ENCODE measurements at regions of chr10 and their contacts with region 1.

Region 1: GRCh38 chr10:22228943-22229801 is 11.4 kb upstream of the EBLN1 start:
- DNase-seq: peak; percentile 91
- H3K4me3 Mint-ChIP-seq: peak overlapping the region; percentile 87
- H3K27ac Mint-ChIP-seq: peak overlapping the region; percentile 82
- H3K4me1 Mint-ChIP-seq: no peaks in the 10 kb centered on the region
- H3K27me3 Mint-ChIP-seq: no peaks in the 10 kb centered on the region
- CTCF ChIP-seq: no peak

Region 2: DNA sequence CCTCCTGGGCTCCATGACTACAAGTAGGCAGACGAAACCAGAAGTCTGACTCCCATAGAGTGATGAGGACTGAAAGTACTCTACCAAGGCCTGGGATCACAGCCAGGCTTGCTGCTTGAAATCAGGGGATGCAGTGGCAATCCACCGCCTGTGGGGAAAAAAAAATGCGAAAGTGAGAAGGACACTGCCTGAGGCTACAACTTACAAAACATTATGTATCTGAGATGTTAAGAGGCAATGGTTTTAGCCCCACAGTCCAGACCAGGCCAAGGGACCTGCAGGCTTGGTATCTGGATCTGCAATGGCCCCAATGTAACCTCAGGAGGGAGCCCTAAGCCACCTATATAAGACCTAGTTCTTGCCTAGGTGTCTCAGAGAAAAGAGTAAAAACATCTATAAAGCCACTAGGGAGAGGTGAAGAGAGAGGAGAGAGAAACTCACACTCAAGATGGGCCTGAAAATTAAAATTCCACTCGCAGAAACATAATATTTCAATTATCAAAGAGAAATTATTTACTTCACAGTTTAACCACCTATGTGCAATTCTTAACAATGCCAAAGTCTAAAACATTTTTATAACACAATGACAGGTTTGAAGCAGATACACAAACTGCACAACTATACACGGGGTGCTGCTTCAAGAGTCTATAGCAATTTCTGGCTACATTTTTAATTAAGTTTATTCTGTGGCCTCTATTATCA is 239.6 kb before region 1 on chr10:
- CTCF ChIA-PET with region 1: interaction called, 4 read pairs
- POLR2A ChIA-PET with region 1: interaction called, 10 read pairs
- intact Hi-C with region 1: no loop called
- DNase-seq: peak; percentile 74
- H3K4me3 Mint-ChIP-seq: peak overlapping the region; percentile 5
- H3K27ac Mint-ChIP-seq: peak overlapping the region; percentile 63
- H3K4me1 Mint-ChIP-seq: peaks cover 19% of the 10 kb centered on the region
- H3K27me3 Mint-ChIP-seq: no peaks in the 10 kb centered on the region
- CTCF ChIP-seq: peak; percentile 42

Region 3: GRCh38 chr10:22010973-22011408 is 218.2 kb before region 1 on chr10:
- CTCF ChIA-PET with region 1: interaction called, 9 read pairs
- POLR2A ChIA-PET with region 1: interaction called, 11 read pairs
- intact Hi-C with region 1: no loop called
- DNase-seq: peak; percentile 31
- H3K4me3 Mint-ChIP-seq: no peak overlapping the region
- H3K27ac Mint-ChIP-seq: no peak overlapping the region
- H3K4me1 Mint-ChIP-seq: no peaks in the 10 kb centered on the region
- H3K27me3 Mint-ChIP-seq: no peaks in the 10 kb centered on the region
- CTCF ChIP-seq: peak; percentile 25

Region 4: GRCh38 chr10:22193945-22194344 is 35.2 kb before region 1 on chr10:
- CTCF ChIA-PET with region 1: no interaction called
- POLR2A ChIA-PET with region 1: no interaction called
- intact Hi-C with region 1: no loop called
- DNase-seq: no peak
- H3K4me3 Mint-ChIP-seq: no peak overlapping the region
- H3K27ac Mint-ChIP-seq: no peak overlapping the region
- H3K4me1 Mint-ChIP-seq: no peaks in the 10 kb centered on the region
- H3K27me3 Mint-ChIP-seq: no peaks in the 10 kb centered on the region
- CTCF ChIP-seq: no peak

Region 5: GRCh38 chr10:22245567-22245966 is 16.4 kb after region 1 on chr10:
- CTCF ChIA-PET with region 1: no interaction called
- POLR2A ChIA-PET with region 1: interaction called, 14 read pairs
- intact Hi-C with region 1: loop called (anchors 1 kb)
- DNase-seq: no peak
- H3K4me3 Mint-ChIP-seq: no peak overlapping the region
- H3K27ac Mint-ChIP-seq: no peak overlapping the region
- H3K4me1 Mint-ChIP-seq: peaks cover 22% of the 10 kb centered on the region
- H3K27me3 Mint-ChIP-seq: no peaks in the 10 kb centered on the region
- CTCF ChIP-seq: no peak

Region 6: DNA sequence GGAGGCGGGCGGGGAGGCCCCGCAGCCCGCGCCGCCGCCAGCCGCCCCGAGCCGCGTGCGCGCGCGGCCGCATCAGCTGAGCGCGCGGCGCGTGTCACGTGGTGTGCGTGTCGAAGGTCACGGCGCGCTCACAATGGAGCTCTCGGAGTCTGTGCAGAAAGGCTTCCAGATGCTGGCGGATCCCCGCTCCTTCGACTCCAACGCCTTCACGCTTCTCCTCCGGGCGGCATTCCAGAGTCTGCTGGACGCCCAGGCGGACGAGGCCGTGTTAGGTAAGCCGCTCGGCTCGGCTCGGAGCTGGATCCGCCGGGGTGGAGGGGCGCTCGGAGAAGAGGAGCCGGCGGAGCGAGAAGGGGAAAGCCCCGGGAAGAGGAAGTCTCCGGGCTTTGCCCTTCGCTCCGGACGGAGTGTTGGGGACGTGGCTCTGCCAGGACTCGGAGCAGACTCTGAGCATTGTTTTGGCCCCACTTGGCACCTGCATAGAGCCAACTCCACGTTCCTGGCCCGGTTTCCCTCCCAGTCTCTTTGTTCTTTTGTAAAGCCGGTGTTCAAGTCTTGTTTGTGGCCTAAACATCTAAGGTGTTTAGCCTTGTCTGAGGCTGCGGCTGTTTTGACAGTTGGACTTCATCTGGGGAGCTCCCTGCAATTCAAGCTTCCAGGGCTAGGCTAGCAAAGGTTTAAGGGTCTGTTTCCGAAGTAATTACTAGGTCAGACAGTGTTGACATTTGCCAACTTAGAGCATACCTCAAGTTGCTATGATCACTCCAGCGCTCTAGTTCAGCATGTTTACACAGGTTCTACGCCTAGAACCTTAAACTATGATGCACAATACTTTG is 87.3 kb after region 1 on chr10 and contains the start of gene COMMD3:
- CTCF ChIA-PET with region 1: interaction called, 3 read pairs
- POLR2A ChIA-PET with region 1: interaction called, 239 read pairs
- intact Hi-C with region 1: loop called (anchors 1 kb)
- DNase-seq: peak; percentile 86
- H3K4me3 Mint-ChIP-seq: peak within 1 kb of the TSS; percentile 85
- H3K27ac Mint-ChIP-seq: peak within 1 kb of the TSS; percentile 84
- H3K4me1 Mint-ChIP-seq: peaks cover 16% of the 10 kb centered on the region
- H3K27me3 Mint-ChIP-seq: no peaks in the 10 kb centered on the region
- CTCF ChIP-seq: no peak
- total RNA-seq, gene COMMD3: 69.4 and 73.4 TPM in 2 replicates

Region 7: GRCh38 chr10:22340362-22341189 is 111.4 kb after region 1 on chr10:
- CTCF ChIA-PET with region 1: no interaction called
- POLR2A ChIA-PET with region 1: interaction called, 14 read pairs
- intact Hi-C with region 1: loop called (anchors 1 kb)
- DNase-seq: peak; percentile 79
- H3K4me3 Mint-ChIP-seq: peak overlapping the region; percentile 75
- H3K27ac Mint-ChIP-seq: peak overlapping the region; percentile 85
- H3K4me1 Mint-ChIP-seq: peaks cover 9% of the 10 kb centered on the region
- H3K27me3 Mint-ChIP-seq: peaks cover 15% of the 10 kb centered on the region
- CTCF ChIP-seq: no peak

Region 8: GRCh38 chr10:22443175-22443901 is 214.2 kb after region 1 on chr10:
- CTCF ChIA-PET with region 1: no interaction called
- POLR2A ChIA-PET with region 1: no interaction called
- intact Hi-C with region 1: no loop called
- DNase-seq: no peak
- H3K4me3 Mint-ChIP-seq: no peak overlapping the region
- H3K27ac Mint-ChIP-seq: no peak overlapping the region
- H3K4me1 Mint-ChIP-seq: no peaks in the 10 kb centered on the region
- H3K27me3 Mint-ChIP-seq: no peaks in the 10 kb centered on the region
- CTCF ChIP-seq: no peak

Measured in MCF 10A (cell line).